Activated T-helper 1 cell treated with anti-CD3 and anti-CD28 coated beads, Interleukin-12 subunit alpha, Interleukin-12 subunit beta, Interleukin-2, Interleukin-4 antibody, amounts not matched to agents 30 ng/mL and 10 ng/mL and 1 ng/mL, durations not matched to agents 14 hours and 24 hours and 36 hours (primary cell): ENCODE measurements at regions of chr3 and their contacts with region 1.

Region 1: DNA sequence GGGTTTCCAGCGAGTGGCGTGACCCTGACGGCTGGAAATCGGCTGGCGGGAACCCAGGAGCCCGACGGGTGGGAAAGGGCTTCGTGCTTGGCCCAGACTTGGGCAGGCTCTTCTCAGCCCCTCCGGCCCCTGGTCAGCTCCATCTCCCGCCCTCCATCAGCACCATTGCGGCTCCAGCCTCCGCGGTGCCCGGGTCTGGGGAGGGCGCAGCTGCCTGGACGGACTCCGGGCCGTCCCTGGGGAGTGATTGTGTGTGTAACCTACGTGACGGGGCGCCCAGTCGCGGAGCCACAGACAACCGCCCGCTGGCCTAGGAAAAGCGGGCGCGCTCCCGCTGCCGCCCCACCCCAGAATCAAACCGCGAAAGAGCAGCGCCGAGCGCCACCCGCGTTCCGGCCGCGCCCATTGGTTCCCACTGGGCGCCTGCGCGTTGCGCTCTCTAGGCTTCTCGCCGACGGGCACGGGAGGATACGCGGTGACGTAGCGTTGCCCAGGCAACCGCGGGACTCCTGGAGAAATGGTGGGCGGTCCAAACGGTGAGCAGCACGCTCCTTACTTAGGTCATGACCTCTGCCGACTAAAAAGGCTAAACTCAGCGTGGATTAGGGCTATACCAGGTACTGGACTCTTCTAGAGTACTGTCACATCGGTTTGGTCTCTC is at the start of gene CFAP20DC:
- DNase-seq: peak; percentile 90
- H3K4me3 Mint-ChIP-seq: peak within 1 kb of the TSS; percentile 65
- H3K27ac Mint-ChIP-seq: peak within 1 kb of the TSS; percentile 67
- H3K4me1 Mint-ChIP-seq: peaks cover 15% of the 10 kb centered on the region
- H3K27me3 Mint-ChIP-seq: peaks cover 14% of the 10 kb centered on the region
- total RNA-seq, gene CFAP20DC: 0.86 and 1.2 TPM in 2 replicates

Region 2: DNA sequence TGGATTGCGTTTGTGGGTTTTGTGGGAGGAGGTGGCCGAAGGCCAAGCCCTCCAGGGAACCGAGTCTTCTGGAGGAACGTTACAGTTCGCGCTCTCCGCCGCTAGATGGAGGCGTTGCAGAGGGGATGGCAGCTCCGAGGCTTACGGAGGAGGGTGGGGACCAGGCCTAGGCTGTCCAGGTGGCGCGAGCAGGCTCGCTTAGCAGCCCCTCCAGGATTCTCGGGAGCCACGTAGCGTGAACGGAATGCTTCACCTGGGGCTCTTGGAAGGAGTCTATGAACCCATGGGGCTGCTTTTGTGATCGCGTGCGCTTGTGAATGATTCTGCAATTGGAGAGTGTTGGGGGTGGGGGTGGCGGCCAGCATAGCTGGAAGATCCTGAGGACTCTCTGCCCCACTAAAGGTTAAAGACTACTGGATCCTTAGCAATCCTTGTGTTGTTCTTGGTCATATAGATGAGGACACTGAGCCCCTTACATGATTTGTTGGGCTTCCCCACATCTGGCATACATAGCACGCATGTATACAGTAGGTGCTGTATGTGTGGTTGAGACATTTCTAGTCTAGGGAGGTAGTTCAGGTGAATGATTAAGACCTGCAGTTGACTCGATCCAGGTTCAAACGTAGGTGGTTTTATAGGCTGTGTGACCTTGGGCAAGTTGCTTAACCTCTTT is 409.0 kb before region 1 on chr3:
- intact Hi-C with region 1: loop called (anchors 1 kb)
- DNase-seq: peak; percentile 30
- H3K4me3 Mint-ChIP-seq: no peak overlapping the region
- H3K27ac Mint-ChIP-seq: no peak overlapping the region
- H3K4me1 Mint-ChIP-seq: no peaks in the 10 kb centered on the region
- H3K27me3 Mint-ChIP-seq: no peaks in the 10 kb centered on the region

Region 3: DNA sequence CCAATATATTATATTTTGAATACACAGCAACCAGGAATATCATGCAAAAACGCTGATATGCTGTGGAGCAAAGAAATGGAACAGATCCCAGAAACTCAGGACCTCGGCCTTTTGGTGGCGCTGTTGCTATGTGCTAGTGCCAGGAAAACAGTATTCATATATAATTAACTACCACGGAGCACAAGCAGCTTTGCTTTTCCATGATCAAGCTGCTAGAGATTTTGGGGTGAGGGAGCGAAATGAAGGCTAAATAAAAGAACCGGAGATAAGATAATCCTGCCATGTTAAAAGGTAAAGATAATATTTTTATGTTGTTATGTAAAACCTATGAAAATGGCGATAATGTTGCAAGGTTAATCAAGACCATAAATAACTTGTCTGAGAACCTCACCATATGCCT is 225.5 kb before region 1 on chr3:
- intact Hi-C with region 1: loop called (anchors 1 kb)
- DNase-seq: no peak
- H3K4me3 Mint-ChIP-seq: no peak overlapping the region
- H3K27ac Mint-ChIP-seq: no peak overlapping the region
- H3K4me1 Mint-ChIP-seq: no peaks in the 10 kb centered on the region
- H3K27me3 Mint-ChIP-seq: peaks cover 7% of the 10 kb centered on the region

Region 4: DNA sequence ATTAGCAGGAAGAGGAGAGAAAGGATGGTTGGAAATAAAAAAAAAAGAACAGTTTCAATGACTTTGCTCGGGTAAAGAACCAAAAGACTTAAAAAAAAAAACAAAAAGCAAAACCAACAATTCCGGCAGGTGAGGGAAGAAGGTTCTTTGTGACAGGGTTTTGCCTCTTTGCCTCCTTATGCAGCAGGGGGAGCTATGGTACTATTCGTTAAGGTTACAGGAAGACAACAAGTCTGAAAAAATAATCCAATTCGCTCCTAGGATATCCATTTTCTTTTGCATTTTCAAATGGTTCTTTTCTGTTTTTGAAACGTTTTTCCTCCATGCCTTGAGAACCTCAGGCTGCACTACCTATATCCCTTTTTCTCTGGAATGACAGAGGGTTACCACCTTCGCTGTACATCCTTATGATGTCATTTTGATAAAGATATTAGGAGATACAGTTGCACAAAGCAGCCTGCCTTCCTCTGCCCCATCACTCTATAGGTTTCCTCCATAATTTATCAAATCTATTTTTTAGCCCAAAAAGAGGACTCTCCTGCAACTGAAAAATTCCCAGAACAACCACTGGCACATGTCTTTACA is 55.0 kb before region 1 on chr3:
- intact Hi-C with region 1: loop called (anchors 1 kb)
- DNase-seq: peak; percentile 9
- H3K4me3 Mint-ChIP-seq: no peak overlapping the region
- H3K27ac Mint-ChIP-seq: no peak overlapping the region
- H3K4me1 Mint-ChIP-seq: peaks cover 5% of the 10 kb centered on the region
- H3K27me3 Mint-ChIP-seq: peaks cover 10% of the 10 kb centered on the region